Natural killer cell (primary cell): ENCODE measurements at regions of chr7 and their contacts with region 1.

Region 1: DNA sequence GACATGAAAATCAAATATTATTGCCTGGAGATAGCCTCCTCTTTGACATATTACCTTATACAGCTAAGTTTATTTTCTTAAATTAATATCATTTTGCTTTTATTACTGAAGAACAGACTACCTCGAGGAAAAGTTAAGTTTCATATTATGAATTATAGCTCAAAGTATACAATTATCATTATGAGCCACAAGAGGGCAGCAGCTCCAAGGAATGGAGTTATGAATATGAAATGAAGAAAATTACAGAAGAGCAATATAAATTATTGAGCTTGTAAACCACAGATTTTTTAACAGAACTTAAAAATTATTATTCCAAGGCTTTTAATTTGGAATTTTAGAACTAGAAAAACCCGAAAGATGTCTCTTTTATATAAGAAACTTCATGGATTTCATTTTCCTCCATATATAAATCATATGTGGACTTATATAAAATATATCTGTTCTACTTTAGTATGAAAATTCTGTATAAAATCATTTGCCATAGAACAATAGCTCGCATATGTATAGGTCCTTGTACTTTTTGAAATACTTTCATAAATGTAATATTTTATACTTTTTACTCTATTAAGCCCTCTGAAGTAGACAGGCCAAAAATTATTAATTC is 40.1 kb downstream of the IQUB start:
- DNase-seq: peak in 1 of 2 donors; percentile 71
- ATAC-seq: peak; percentile 55 to 72 (median 69)
- H3K4me3 ChIP-seq: no peak overlapping the region
- H3K4me3 Mint-ChIP-seq: no peak overlapping the region
- H3K27ac ChIP-seq: no peak overlapping the region
- H3K27ac Mint-ChIP-seq: no peak overlapping the region
- H3K4me1 ChIP-seq: no peaks in the 10 kb centered on the region
- H3K4me1 Mint-ChIP-seq: no peaks in the 10 kb centered on the region
- H3K27me3 ChIP-seq: peaks cover 12% of the 10 kb centered on the region
- H3K27me3 Mint-ChIP-seq: peaks cover 13 to 37% of the 10 kb centered on the region in 2 donors
- CTCF ChIP-seq: peak; percentile 88

Region 2: GRCh38 chr7:123425246-123425645 is 69.0 kb before region 1 on chr7:
- intact Hi-C with region 1: no loop called
- DNase-seq: no peak
- ATAC-seq: no peak
- H3K4me3 ChIP-seq: no peak overlapping the region
- H3K4me3 Mint-ChIP-seq: no peak overlapping the region
- H3K27ac ChIP-seq: no peak overlapping the region
- H3K27ac Mint-ChIP-seq: no peak overlapping the region
- H3K4me1 ChIP-seq: no peaks in the 10 kb centered on the region
- H3K4me1 Mint-ChIP-seq: no peaks in the 10 kb centered on the region
- H3K27me3 ChIP-seq: no peaks in the 10 kb centered on the region
- H3K27me3 Mint-ChIP-seq: no peaks in the 10 kb centered on the region
- CTCF ChIP-seq: no peak

Region 3: DNA sequence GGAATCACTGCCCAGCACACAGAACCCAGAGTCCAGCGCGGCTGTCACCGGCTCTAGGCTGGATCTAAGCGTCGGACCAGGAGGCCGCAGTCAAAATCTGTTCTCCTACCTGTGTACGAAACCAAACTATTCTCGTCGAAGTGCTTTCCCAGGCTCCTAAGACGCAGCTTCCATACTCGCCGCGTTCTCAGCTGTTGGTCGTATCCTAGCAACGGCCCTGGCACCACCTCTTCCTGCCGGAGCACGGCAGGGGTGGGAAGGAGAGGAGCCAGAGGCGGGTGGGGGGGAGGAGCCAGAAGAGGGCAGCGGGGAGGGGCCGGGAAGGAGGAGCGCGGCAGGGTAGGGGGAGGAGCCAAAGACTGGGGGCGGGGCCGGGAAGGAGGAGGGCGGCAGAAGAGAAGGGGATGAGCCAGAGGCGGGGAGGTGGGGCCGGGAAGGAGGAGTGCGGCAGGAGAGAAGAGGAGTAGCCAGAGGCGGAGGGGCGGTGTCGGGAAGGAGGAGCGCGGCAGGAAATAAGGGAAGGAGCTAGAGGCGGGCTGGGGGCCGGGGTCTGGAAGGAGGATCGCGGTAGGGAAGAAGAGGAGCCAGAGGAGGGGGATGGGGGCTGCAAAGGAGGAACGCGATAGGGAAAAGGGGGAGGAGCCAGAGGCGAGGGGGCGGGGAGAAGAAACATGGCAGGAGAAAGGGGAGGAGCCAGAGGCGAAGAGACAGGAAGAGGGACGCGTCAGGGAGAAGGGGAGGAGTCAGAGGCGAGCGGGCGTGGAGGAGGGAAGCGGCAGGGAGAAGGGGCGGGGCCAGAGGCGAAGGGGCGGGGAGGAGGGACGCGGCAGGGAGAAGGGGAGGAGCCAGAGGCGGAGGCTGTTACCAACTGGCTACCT is 40.3 kb after region 1 on chr7 and contains the start of gene IQUB:
- intact Hi-C with region 1: loop called (anchors 1 kb)
- DNase-seq: peak; percentile 85 to 97
- ATAC-seq: peak; percentile 87 to 96 (median 90)
- H3K4me3 ChIP-seq: peak within 1 kb of the TSS; percentile 82
- H3K4me3 Mint-ChIP-seq: peak within 1 kb of the TSS; percentile 97
- H3K27ac ChIP-seq: peak within 1 kb of the TSS; percentile 71
- H3K27ac Mint-ChIP-seq: peak within 1 kb of the TSS; percentile 88 to 94
- H3K4me1 ChIP-seq: peaks cover 18% of the 10 kb centered on the region
- H3K4me1 Mint-ChIP-seq: peaks cover 18 to 25% of the 10 kb centered on the region in 2 donors
- H3K27me3 ChIP-seq: peaks cover 2% of the 10 kb centered on the region
- H3K27me3 Mint-ChIP-seq: peaks cover 6% of the 10 kb centered on the region in 2 donors
- CTCF ChIP-seq: no peak
- total RNA-seq, gene IQUB: 0.09 to 0.45 (median 0.18) TPM

Region 4: DNA sequence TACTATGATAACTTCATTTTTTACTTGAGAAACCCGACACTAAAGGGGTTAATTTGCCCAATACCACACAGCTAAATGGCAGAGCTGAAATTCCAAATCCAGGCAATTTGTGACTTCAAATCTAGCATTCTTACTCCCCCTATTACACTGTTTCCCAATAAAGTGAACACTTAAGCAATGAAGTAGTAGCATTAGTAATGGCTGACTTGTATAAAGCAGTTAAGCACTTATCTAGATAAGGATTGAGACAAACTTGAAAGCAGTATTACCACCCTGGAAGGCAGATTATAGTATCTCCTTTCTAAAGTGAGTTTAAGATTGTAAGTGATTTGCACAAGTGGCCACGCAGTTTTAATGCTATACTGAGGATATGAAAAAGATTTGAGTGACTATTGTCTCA is 215.2 kb after region 1 on chr7:
- intact Hi-C with region 1: loop called (anchors 5 kb)
- DNase-seq: no peak
- ATAC-seq: no peak
- H3K4me3 ChIP-seq: no peak overlapping the region
- H3K4me3 Mint-ChIP-seq: no peak overlapping the region
- H3K27ac ChIP-seq: no peak overlapping the region
- H3K27ac Mint-ChIP-seq: no peak overlapping the region
- H3K4me1 ChIP-seq: no peaks in the 10 kb centered on the region
- H3K4me1 Mint-ChIP-seq: peaks cover 39 to 54% of the 10 kb centered on the region in 2 donors
- H3K27me3 ChIP-seq: no peaks in the 10 kb centered on the region
- H3K27me3 Mint-ChIP-seq: no peaks in the 10 kb centered on the region
- CTCF ChIP-seq: no peak